ENCODE measurements at regions of chrX and their contacts with region 1.

Region 1: GRCh38 chrX:118345401-118346257 is at the start of gene WDR44:
- DNase-seq: peak; percentile 93
- H3K4me3 ChIP-seq: peak within 1 kb of the TSS; percentile 62 to 74 (median 68)
- H3K27ac ChIP-seq: peak within 1 kb of the TSS; percentile 83
- H3K4me1 ChIP-seq: peaks cover 7% of the 10 kb centered on the region
- H3K27me3 ChIP-seq: no peaks in the 10 kb centered on the region
- CTCF ChIP-seq: no peak
- total RNA-seq, gene WDR44: 18.9 to 23.7 TPM

Region 2: DNA sequence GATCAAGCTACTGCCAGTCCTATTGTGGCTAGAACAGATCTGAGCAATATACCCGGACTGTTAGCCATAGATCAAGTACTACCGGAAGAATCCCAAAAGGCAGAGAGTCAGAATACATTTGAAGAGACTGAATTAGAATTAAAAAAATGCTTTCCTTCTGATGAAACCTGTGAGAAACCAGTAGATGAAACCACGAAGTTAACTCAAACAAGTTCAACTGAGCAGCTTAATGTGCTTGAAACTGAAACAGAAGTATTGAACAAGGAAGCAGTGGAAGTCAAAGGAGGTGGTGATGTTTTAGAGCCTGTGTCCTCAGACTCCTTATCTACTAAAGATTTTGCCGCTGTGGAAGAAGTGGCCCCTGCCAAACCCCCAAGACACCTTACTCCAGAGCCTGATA is 47.1 kb after region 1 on chrX:
- CTCF ChIA-PET with region 1: no interaction called
- dilution Hi-C with region 1: no loop called
- in situ Hi-C with region 1: no loop called
- intact Hi-C with region 1: loop called (anchors 5 kb)
- DNase-seq: no peak
- H3K4me3 ChIP-seq: no peak overlapping the region
- H3K27ac ChIP-seq: no peak overlapping the region
- H3K4me1 ChIP-seq: no peaks in the 10 kb centered on the region
- H3K27me3 ChIP-seq: no peaks in the 10 kb centered on the region
- CTCF ChIP-seq: no peak

Region 3: GRCh38 chrX:118432799-118433198 is 87.2 kb after region 1 on chrX:
- CTCF ChIA-PET with region 1: no interaction called
- dilution Hi-C with region 1: no loop called
- in situ Hi-C with region 1: no loop called
- intact Hi-C with region 1: loop called (anchors 5 kb)
- DNase-seq: no peak
- H3K4me3 ChIP-seq: no peak overlapping the region
- H3K27ac ChIP-seq: no peak overlapping the region
- H3K4me1 ChIP-seq: peaks cover 3% of the 10 kb centered on the region
- H3K27me3 ChIP-seq: no peaks in the 10 kb centered on the region
- CTCF ChIP-seq: no peak

Measured in mammary epithelial cell (primary cell).